ENCODE measurements at regions of chr1 and their contacts with region 1.

Region 1: GRCh38 chr1:85259118-85259911 is at the start of gene C1orf52:
- DNase-seq: peak; percentile 96
- H3K4me3 Mint-ChIP-seq: peak within 1 kb of the TSS; percentile 96
- H3K27ac Mint-ChIP-seq: peak within 1 kb of the TSS; percentile 90
- H3K4me1 Mint-ChIP-seq: peaks cover 40% of the 10 kb centered on the region
- H3K27me3 Mint-ChIP-seq: no peaks in the 10 kb centered on the region
- total RNA-seq, gene C1orf52: 30.9 and 31.6 TPM in 2 replicates

Region 2: GRCh38 chr1:84433258-84434080 is 825.8 kb before region 1 on chr1:
- intact Hi-C with region 1: loop called (anchors 10 kb)
- DNase-seq: peak; percentile 54
- H3K4me3 Mint-ChIP-seq: peak overlapping the region; percentile 41
- H3K27ac Mint-ChIP-seq: peak overlapping the region; percentile 9
- H3K4me1 Mint-ChIP-seq: peaks cover 11% of the 10 kb centered on the region
- H3K27me3 Mint-ChIP-seq: no peaks in the 10 kb centered on the region

Region 3: DNA sequence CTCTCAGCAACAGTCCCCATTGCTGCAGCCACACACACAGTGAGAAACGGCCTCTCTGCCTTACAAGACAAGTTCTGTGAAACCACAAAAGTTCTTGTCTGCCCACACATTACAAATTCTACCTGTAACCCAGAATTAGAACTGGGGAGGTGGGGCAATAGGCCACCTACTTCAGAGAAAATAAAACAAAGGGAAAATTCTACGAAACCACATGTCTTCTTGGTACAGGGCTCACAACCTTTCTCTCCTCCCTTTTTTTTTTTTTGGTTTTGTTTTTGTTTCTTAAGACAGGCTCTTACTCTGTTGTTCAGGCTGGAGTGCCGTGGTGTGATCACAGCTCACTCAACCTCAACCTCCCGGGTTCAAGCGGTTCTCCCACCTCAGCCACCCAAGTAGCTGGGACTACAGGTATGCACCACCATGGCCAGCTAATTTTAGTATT is 396.5 kb before region 1 on chr1:
- intact Hi-C with region 1: loop called (anchors 5 kb)
- DNase-seq: peak; percentile 66
- H3K4me3 Mint-ChIP-seq: peak overlapping the region; percentile 77
- H3K27ac Mint-ChIP-seq: peak overlapping the region; percentile 82
- H3K4me1 Mint-ChIP-seq: peaks cover 53% of the 10 kb centered on the region
- H3K27me3 Mint-ChIP-seq: peaks cover 1% of the 10 kb centered on the region

Region 4: GRCh38 chr1:85061711-85062424 is 197.4 kb before region 1 on chr1:
- intact Hi-C with region 1: loop called (anchors 1 kb)
- DNase-seq: peak; percentile 87
- H3K4me3 Mint-ChIP-seq: peak overlapping the region; percentile 85
- H3K27ac Mint-ChIP-seq: peak overlapping the region; percentile 62
- H3K4me1 Mint-ChIP-seq: peaks cover 15% of the 10 kb centered on the region
- H3K27me3 Mint-ChIP-seq: peaks cover 16% of the 10 kb centered on the region

Region 5: DNA sequence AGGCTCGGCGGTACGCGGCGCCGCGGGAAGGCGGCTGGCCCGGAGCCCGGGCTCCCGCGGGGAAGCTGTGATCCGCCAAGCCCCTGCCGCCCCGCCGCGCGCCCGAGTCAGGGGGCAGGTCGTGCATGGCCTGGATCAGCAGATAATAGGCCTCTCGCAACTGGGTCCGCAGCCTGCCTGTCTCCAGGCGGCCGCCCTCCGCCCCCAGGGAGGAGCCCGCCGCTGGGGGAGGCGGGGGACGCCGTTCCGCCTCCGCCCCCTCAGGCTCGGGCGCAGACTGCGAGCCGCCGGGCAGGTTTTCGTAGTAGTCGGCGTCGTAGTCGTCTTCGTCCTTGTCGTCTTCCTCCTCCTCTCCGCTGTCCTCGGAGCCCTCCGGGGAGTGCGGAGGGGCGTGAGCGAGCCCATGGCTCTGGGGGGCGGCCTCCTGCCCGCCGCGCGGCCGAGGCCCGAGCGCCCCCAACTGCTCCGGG is 58.4 kb before region 1 on chr1 and contains the start of gene SYDE2:
- intact Hi-C with region 1: loop called (anchors 1 kb)
- DNase-seq: peak; percentile 67
- H3K4me3 Mint-ChIP-seq: peak within 1 kb of the TSS; percentile 94
- H3K27ac Mint-ChIP-seq: peak within 1 kb of the TSS; percentile 88
- H3K4me1 Mint-ChIP-seq: peaks cover 18% of the 10 kb centered on the region
- H3K27me3 Mint-ChIP-seq: peaks cover 40% of the 10 kb centered on the region
- total RNA-seq, gene SYDE2: 0.76 and 0.83 TPM in 2 replicates

Region 6: GRCh38 chr1:85707990-85708828 is 448.9 kb after region 1 on chr1 and contains the start of gene ZNHIT6:
- intact Hi-C with region 1: loop called (anchors 1 kb)
- DNase-seq: peak; percentile 82
- H3K4me3 Mint-ChIP-seq: no peak within 1 kb of the TSS
- H3K27ac Mint-ChIP-seq: no peak within 1 kb of the TSS
- H3K4me1 Mint-ChIP-seq: peaks cover 11% of the 10 kb centered on the region
- H3K27me3 Mint-ChIP-seq: no peaks in the 10 kb centered on the region
- total RNA-seq, gene ZNHIT6: 24.6 and 26.3 TPM in 2 replicates

Measured in activated T-helper 1 cell treated with anti-CD3 and anti-CD28 coated beads, Interleukin-12 subunit alpha, Interleukin-12 subunit beta, Interleukin-2, Interleukin-4 antibody, amounts not matched to agents 30 ng/mL and 10 ng/mL and 1 ng/mL, durations not matched to agents 14 hours and 24 hours and 36 hours (primary cell).